Aorta (tissue), 5 donors: ENCODE measurements at regions of chr5 and their contacts with region 1.

Region 1: GRCh38 chr5:15021266-15022046 is 149.9 kb upstream of the ANKH start:
- DNase-seq: peak in 1 of 2 donors; percentile 77
- ATAC-seq: peak; percentile 51
- H3K4me3 ChIP-seq: no peak overlapping the region
- H3K27ac ChIP-seq: peak overlapping the region; percentile 62 to 86
- H3K4me1 ChIP-seq: peaks cover 6 to 9% of the 10 kb centered on the region in 2 donors
- H3K27me3 ChIP-seq: no peaks in the 10 kb centered on the region

Region 2: GRCh38 chr5:14640765-14641164 is 380.7 kb before region 1 on chr5:
- intact Hi-C with region 1: no loop called
- DNase-seq: no peak
- ATAC-seq: no peak
- H3K4me3 ChIP-seq: no peak overlapping the region
- H3K27ac ChIP-seq: no peak overlapping the region
- H3K4me1 ChIP-seq: no peaks in the 10 kb centered on the region
- H3K27me3 ChIP-seq: no peaks in the 10 kb centered on the region

Region 3: GRCh38 chr5:15069407-15069905 is 48.0 kb after region 1 on chr5:
- intact Hi-C with region 1: loop called in 1 of 2 experiments (anchors 5 kb)
- DNase-seq: no peak
- ATAC-seq: no peak
- H3K4me3 ChIP-seq: no peak overlapping the region
- H3K27ac ChIP-seq: no peak overlapping the region
- H3K4me1 ChIP-seq: peaks cover 0 to under 1% of the 10 kb centered on the region in 2 donors
- H3K27me3 ChIP-seq: no peaks in the 10 kb centered on the region

Region 4: GRCh38 chr5:15079566-15079965 is 58.1 kb after region 1 on chr5:
- intact Hi-C with region 1: loop called in 1 of 2 experiments (anchors 1 kb)
- DNase-seq: no peak
- ATAC-seq: peak; percentile 23
- H3K4me3 ChIP-seq: no peak overlapping the region
- H3K27ac ChIP-seq: peak overlapping the region; percentile 54 to 74
- H3K4me1 ChIP-seq: peaks cover 2 to 3% of the 10 kb centered on the region in 2 donors
- H3K27me3 ChIP-seq: no peaks in the 10 kb centered on the region

Region 5: DNA sequence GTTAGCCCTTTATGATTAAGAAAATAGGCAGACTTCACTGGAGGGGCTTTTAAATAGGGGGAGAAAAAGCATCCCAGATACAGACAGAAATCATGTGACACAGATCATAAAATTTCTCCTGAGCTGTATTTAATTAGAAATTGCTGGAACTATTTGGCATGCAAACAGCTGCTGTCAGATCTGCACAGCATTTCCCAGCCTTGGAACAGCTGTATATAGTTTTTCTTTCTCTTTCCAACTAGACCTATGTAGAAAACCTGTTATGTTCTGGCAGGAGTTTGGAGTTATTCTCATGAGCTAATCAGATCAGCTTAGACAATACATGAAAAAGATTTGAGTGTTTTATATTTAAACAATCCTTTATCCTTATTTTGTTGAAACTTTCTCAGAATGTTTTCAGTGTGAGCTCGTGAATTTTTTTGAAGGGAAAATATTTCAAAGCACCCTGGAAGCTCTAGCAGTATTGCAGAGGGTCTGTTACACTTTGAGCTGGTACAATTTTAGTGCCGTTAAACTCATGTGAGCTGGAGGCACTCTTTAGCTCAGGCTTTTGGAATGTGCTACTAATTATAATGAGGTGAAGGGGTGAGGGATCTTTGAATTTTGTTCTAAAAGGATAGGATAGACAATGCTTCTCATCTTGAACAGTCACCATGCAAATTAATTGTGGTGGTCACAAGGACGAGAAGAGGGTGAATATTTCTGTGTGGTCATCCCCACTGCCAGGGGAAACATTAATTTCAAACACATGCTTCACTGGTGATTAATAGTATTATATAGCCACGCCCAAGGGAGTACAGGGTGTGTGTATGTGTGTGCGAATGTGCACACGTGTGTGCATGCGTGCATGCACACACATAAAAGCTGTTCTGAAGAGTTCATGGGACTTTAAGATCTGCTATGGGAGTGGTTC is 239.2 kb after region 1 on chr5:
- intact Hi-C with region 1: loop called (anchors 10 kb)
- DNase-seq: no peak
- ATAC-seq: no peak
- H3K4me3 ChIP-seq: peak overlapping the region in 1 of 2 donors; percentile 20
- H3K27ac ChIP-seq: peak overlapping the region; percentile 76 to 87
- H3K4me1 ChIP-seq: peaks cover 2 to 14% of the 10 kb centered on the region in 2 donors
- H3K27me3 ChIP-seq: no peaks in the 10 kb centered on the region